ENCODE measurements at regions of chr16 and their contacts with region 1.

Region 1: GRCh38 chr16:23423496-23424049 is 29.4 kb downstream of the COG7 start:
- DNase-seq: peak; percentile 99
- H3K4me3 Mint-ChIP-seq: peak overlapping the region; percentile 54
- H3K27ac Mint-ChIP-seq: peak overlapping the region; percentile 81
- H3K4me1 Mint-ChIP-seq: peaks cover 23% of the 10 kb centered on the region
- H3K27me3 Mint-ChIP-seq: no peaks in the 10 kb centered on the region
- CTCF ChIP-seq: no peak

Region 2: GRCh38 chr16:23149349-23149996 is 274.1 kb before region 1 on chr16 and contains the start of gene USP31:
- CTCF ChIA-PET with region 1: interaction called, 4 read pairs
- POLR2A ChIA-PET with region 1: interaction called, 10 read pairs
- intact Hi-C with region 1: no loop called
- DNase-seq: peak; percentile 97
- H3K4me3 Mint-ChIP-seq: peak within 1 kb of the TSS; percentile 90
- H3K27ac Mint-ChIP-seq: peak within 1 kb of the TSS; percentile 91
- H3K4me1 Mint-ChIP-seq: peaks cover 19% of the 10 kb centered on the region
- H3K27me3 Mint-ChIP-seq: no peaks in the 10 kb centered on the region
- CTCF ChIP-seq: no peak
- total RNA-seq, gene USP31: 23.0 and 26.9 TPM in 2 replicates

Region 3: DNA sequence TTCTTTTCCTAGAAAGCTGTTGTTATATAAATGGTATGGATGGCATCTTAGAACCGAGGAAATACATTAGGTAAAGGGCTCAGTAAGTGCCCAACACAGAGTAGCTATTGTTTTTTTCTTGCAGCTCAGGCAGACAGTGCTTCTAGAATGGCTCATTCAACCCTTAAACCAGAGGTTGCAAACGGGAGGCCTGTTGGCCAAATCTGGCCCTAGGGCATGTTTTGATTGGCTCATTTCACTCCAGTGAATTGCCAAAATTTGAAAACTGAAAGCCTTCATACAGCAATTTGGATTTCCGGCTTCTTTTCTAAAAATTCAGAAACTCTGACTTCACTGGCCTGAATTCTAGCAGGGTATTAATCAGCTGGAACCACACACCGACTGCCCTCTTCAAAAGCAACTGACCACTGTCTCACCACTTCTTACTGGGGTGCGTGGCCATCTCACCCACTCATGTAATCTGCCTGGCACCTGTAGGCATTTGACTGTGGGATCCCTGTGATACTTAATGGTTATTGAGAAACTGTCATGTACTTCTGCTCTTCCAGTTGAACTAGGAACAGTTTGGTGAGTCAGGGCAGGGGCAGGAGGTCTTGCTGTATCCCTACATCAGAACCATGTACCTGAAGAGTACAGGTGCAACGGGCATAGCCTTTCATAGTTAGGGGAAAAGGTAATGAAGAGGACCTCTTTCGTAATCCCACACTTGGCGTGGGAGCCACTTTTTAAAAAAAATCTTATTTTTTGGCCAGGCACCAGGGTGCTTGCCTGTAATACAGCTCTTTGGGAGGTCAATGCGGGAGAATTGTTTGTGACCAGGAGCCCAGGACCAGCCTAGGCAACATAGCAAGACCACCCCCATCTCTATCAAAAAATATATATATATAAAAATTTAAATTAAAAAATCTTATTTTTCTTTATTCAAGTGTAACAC is 175.0 kb before region 1 on chr16:
- CTCF ChIA-PET with region 1: interaction called, 4 read pairs
- POLR2A ChIA-PET with region 1: interaction called, 14 read pairs
- intact Hi-C with region 1: no loop called
- DNase-seq: peak; percentile 91
- H3K4me3 Mint-ChIP-seq: peak overlapping the region; percentile 55
- H3K27ac Mint-ChIP-seq: peak overlapping the region; percentile 82
- H3K4me1 Mint-ChIP-seq: peaks cover 9% of the 10 kb centered on the region
- H3K27me3 Mint-ChIP-seq: no peaks in the 10 kb centered on the region
- CTCF ChIP-seq: no peak

Region 4: GRCh38 chr16:23362460-23363317 is 60.9 kb before region 1 on chr16:
- CTCF ChIA-PET with region 1: interaction called, 5 read pairs
- POLR2A ChIA-PET with region 1: interaction called, 20 read pairs
- intact Hi-C with region 1: no loop called
- DNase-seq: peak; percentile 95
- H3K4me3 Mint-ChIP-seq: no peak overlapping the region
- H3K27ac Mint-ChIP-seq: peak overlapping the region; percentile 68
- H3K4me1 Mint-ChIP-seq: peaks cover 41% of the 10 kb centered on the region
- H3K27me3 Mint-ChIP-seq: no peaks in the 10 kb centered on the region
- CTCF ChIP-seq: no peak

Region 5: GRCh38 chr16:23408823-23409298 is 14.7 kb before region 1 on chr16:
- CTCF ChIA-PET with region 1: interaction called, 4 read pairs
- POLR2A ChIA-PET with region 1: interaction called, 12 read pairs
- intact Hi-C with region 1: no loop called
- DNase-seq: no peak
- H3K4me3 Mint-ChIP-seq: no peak overlapping the region
- H3K27ac Mint-ChIP-seq: peak overlapping the region; percentile 49
- H3K4me1 Mint-ChIP-seq: no peaks in the 10 kb centered on the region
- H3K27me3 Mint-ChIP-seq: no peaks in the 10 kb centered on the region
- CTCF ChIP-seq: no peak